ENCODE measurements at regions of chr5 and their contacts with region 1.

Region 1: DNA sequence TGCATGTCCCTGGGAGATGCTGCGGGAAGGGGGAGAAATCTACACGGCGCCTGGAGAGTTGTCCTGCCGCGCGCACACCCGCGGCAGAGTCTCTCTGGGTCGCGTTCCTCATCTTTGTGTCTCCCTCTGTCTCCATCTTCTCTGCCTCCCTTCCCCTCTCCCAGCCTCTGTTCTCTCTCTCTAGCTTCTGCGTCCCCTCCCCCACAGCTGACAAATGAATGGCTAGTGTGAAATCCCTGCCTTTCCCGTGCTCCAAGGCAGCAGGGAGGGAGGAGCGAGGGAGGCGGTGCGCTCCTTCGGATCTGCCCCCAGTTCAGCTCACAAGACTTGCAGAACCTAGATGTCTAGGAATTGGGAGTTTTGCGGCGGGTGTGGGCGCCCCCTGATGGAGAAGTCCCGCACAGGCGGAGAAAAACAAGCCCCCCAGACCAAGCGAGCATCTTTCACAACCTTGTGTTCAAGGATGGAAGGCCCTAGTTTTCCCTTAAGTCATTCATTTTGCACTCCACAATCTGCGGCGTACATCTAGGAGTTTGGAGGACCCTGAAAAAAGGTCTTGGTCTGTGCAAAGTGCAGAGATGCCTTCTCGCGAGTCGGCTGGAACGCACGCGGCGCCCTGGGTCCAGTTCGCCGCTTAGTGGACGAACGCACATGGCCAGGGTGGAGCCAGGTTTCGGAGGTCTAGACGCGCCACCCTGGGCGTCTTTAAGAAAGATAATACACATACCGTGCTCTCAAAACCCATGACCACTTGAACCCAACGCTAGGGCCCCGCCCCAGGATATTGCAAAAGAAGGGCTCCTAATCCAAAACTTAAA is 2.0 kb downstream of the VCAN start:
- DNase-seq: peak; percentile 95
- ATAC-seq: peak; percentile 94

Region 2: DNA sequence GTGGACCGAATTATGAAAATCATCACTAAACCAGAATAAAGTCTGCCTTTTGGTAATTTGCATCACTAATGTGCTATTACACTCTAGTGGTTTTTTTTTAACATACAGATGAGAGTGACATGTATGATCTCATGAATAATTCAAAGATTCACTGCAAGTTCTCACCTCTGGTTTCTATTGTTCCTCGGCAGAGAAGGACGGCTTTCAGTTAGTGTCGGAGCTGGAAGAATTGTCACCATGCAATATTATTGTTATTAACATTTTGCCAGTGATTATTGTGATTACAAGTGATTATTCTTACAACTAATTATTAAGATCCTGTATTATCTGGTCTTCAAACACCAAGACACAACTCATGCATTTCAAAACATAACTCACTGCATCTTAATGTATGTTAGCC is 828.8 kb before region 1 on chr5:
- intact Hi-C with region 1: loop called (anchors 5 kb)
- DNase-seq: no peak
- ATAC-seq: no peak

Region 3: DNA sequence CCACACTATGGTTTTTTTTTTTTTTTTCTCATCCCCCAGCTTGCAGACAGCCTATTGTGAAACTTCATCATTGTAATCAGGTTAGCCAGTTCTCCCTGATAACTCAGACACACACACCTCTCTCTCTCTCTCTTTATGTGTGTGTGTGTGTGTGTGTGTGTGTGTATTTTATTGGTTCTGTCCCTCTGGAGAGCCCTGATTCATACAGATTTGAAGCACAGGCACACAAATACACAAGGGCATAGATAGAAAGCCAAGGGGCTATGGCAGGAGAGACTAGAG is 22.6 kb before region 1 on chr5:
- intact Hi-C with region 1: no loop called
- DNase-seq: no peak
- ATAC-seq: no peak

Measured in sciatic nerve (tissue), 2 donors.